Spleen (tissue), 13 donors: ENCODE measurements at regions of chr3 and their contacts with region 1.

Region 1: DNA sequence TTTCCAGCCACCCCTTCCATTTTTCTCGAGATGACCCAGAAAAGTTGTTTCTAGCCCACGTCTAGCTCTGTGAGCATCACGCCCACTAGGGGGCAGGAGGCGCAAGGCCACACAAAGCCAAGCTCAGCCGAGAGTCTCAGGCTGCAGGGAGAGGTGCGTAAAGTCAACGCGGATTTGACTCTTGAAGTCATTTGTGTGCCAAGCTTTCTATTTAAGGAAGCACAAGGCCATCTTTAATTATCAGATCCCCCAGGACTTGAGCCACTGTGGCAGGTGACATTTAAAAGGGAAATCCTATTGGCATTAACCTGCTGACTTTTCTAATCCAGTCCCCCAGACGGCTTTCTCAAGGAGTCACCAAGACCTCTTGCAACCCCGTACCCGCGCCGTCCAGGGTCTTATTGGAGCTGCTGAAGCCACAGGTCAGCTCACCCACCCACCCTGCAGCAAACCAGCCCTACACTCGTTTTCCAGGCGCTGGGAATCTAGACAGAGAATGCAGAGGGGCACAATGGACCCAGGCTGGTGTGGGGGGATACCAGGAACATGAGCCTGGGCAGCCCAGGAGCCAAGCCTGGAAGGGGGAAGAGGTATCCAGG is 62.1 kb downstream of the CAPN7 start:
- DNase-seq: peak; percentile 95
- H3K4me3 ChIP-seq: peak overlapping the region in 1 of 8 donors; percentile 52
- H3K27ac ChIP-seq: peak overlapping the region in 3 of 8 donors; percentile 86 to 88 (median 88)
- H3K4me1 ChIP-seq: peaks cover 49 to 99% (median 72%) of the 10 kb centered on the region in 6 donors
- H3K27me3 ChIP-seq: no peaks in the 10 kb centered on the region
- CTCF ChIP-seq: peak; percentile 81 to 96 (median 93)
- POLR2A ChIP-seq: no peak

Region 2: DNA sequence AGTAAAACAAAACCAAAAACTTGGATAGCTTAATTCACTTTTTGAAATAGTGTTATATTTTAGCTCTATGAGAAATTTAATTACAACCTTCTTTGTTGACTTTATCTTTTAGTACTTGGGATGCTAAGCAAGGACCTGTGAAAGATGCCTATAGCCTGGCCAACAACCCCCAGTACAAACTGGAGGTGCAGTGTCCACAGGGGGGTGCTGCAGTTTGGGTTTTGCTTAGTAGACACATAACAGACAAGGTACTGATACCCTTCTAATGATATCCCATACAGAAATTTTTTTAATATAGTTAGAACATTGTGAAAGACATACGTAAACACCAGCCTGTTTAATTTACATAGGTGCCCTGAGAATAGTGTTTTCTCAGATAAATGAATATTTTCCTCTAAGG is 26.8 kb before region 1 on chr3:
- intact Hi-C with region 1: no loop called
- DNase-seq: no peak
- H3K4me3 ChIP-seq: no peak overlapping the region
- H3K27ac ChIP-seq: no peak overlapping the region
- H3K4me1 ChIP-seq: no peaks in the 10 kb centered on the region
- H3K27me3 ChIP-seq: no peaks in the 10 kb centered on the region
- CTCF ChIP-seq: peak in 7 of 11 experiments; percentile 18 to 51 (median 38)
- POLR2A ChIP-seq: no peak

Region 3: DNA sequence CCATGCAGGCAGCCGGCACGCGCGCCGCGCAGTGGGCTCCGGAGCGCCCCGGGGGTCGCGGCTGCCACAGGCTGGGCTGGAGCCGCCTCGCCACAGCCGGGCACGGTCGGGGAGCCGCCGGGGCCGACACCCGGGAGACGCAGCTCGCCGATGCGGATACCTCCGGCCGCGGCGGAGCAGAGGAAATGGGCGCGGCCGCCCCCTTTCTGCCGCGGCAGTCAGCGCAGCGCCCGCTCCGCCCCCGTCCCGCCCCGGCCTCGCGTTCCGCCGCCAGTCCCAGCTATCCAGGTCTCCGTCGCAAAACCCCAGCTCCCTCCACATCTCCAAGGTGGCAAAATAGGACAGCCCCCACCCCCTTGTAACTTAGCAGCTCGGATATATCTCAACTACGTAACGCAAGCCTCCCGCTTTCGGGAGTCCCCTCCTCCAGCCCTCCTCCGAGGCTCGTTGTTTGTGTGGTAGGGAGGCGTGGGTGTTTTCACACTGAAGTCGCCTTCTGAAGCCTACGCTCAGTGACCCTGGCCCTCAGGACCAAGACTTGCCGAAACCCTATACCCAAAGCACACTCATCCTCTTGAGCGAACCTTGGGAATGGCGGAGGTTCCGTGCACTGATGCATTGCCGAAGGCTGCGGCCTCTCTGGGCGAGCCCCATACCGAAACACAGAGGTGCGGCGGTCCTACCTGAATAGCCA is 64.4 kb after region 1 on chr3 and contains the start of gene SH3BP5:
- intact Hi-C with region 1: loop called (anchors 10 kb)
- DNase-seq: peak; percentile 97
- H3K4me3 ChIP-seq: peak within 1 kb of the TSS; percentile 62 to 99 (median 86)
- H3K27ac ChIP-seq: peak within 1 kb of the TSS; percentile 53 to 97 (median 90)
- H3K4me1 ChIP-seq: peaks cover 21 to 61% (median 51%) of the 10 kb centered on the region in 6 donors
- H3K27me3 ChIP-seq: peaks cover 0 to 5% (median 0%) of the 10 kb centered on the region in 7 donors
- CTCF ChIP-seq: peak; percentile 72 to 94 (median 85)
- POLR2A ChIP-seq: peak in 1 of 3 donors; percentile 58
- total RNA-seq, gene SH3BP5: 46.6 to 75.0 (median 62.3) TPM

Region 4: GRCh38 chr3:15377961-15378791 is 110.0 kb after region 1 on chr3:
- intact Hi-C with region 1: loop called (anchors 2 kb)
- DNase-seq: peak; percentile 95
- H3K4me3 ChIP-seq: peak overlapping the region in 1 of 8 donors; percentile 44
- H3K27ac ChIP-seq: peak overlapping the region; percentile 30 to 79 (median 71)
- H3K4me1 ChIP-seq: peaks cover 0 to 23% (median 8%) of the 10 kb centered on the region in 6 donors
- H3K27me3 ChIP-seq: no peaks in the 10 kb centered on the region
- CTCF ChIP-seq: peak; percentile 68 to 96 (median 92)
- POLR2A ChIP-seq: no peak